A673 (cell line): ENCODE measurements at regions of chr6 and their contacts with region 1.

Region 1: DNA sequence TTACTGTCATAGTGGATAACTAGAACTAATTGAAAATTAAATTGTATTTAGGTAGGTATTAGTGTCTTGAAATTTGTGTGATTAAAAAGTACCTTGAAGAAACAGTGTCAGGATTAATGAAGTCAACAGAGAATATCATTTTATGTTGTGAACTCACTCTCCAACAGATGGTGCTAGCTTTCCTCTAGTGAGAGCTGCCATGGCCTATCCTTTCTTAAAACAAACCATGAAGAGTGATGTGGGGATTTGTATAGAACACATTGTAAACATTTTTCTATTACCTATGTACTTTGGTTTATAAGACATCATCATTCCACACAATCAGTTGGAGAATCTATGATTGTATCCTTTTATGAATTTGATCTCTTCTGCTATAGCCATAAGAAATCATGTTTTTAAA is 4.8 kb upstream of the SRSF12 start:
- DNase-seq: peak; percentile 74
- H3K4me3 ChIP-seq: no peak overlapping the region
- H3K27ac ChIP-seq: no peak overlapping the region
- H3K4me1 ChIP-seq: peaks cover 5% of the 10 kb centered on the region
- H3K27me3 ChIP-seq: no peaks in the 10 kb centered on the region
- CTCF ChIP-seq: peak; percentile 72

Region 2: DNA sequence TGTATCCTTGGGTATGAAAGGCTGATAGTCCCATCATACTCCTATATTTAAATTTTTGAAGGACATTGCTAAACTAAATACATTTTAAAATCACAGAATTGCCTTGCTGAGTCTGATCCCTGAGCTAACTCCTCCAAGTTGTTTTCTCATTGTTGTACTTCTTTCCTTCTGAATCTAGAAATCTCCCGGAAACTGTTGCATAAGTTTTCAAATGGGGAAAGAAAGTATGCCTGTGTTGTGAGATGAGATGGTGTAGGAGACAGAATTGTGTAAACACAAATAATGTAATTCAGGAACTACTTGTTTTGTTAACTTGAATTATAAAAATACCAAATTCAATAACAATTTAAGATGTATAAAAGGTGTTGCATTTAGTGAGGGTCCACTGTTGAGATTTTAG is 34.7 kb before region 1 on chr6:
- CTCF ChIA-PET with region 1: no interaction called
- POLR2A ChIA-PET with region 1: no interaction called
- intact Hi-C with region 1: no loop called
- DNase-seq: no peak
- H3K4me3 ChIP-seq: no peak overlapping the region
- H3K27ac ChIP-seq: no peak overlapping the region
- H3K4me1 ChIP-seq: peaks cover 3% of the 10 kb centered on the region
- H3K27me3 ChIP-seq: no peaks in the 10 kb centered on the region
- CTCF ChIP-seq: no peak

Region 3: DNA sequence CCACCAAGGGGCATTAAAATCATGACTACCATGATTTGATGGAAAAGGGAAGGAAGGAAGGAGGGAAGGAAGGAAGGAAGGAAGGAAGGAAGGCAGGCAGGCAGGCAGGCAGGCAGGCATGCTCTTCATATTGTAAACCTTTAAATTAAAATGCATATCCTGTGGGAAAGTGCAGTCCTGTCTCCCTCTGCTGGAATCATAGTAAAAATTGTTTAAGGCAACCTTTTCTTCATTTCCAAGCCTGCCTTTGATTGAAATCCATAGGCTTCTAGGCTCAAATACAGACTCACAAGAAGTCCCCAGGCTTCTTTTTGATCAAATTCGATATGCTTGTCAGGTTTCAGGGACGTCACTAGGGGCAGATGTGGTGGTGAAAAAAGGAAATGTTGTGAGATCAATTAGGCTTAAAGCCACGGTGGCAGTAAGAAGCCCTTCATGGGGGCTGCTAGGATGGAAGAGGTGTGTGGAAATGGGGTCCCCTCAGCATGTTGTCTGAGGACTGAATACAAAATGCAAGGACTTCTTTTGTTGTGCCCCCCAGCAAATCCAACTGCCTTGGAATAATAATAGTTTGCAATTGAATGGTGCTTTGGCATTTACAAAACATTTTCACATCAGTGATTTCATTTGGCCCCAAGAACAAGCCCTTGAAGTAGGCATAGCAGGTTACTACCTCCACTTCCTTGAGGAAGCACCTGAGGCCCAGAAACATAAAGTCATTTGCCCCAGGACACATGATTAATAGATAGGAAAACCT is 120.1 kb after region 1 on chr6:
- CTCF ChIA-PET with region 1: no interaction called
- POLR2A ChIA-PET with region 1: no interaction called
- intact Hi-C with region 1: loop called (anchors 1 kb)
- DNase-seq: peak; percentile 91
- H3K4me3 ChIP-seq: no peak overlapping the region
- H3K27ac ChIP-seq: peak overlapping the region; percentile 63
- H3K4me1 ChIP-seq: peaks cover 37% of the 10 kb centered on the region
- H3K27me3 ChIP-seq: no peaks in the 10 kb centered on the region
- CTCF ChIP-seq: peak; percentile 68

Region 4: GRCh38 chr6:89371849-89372505 is 249.4 kb after region 1 on chr6:
- CTCF ChIA-PET with region 1: no interaction called
- POLR2A ChIA-PET with region 1: no interaction called
- intact Hi-C with region 1: loop called (anchors 1 kb)
- DNase-seq: peak; percentile 75
- H3K4me3 ChIP-seq: no peak overlapping the region
- H3K27ac ChIP-seq: no peak overlapping the region
- H3K4me1 ChIP-seq: peaks cover 10% of the 10 kb centered on the region
- H3K27me3 ChIP-seq: no peaks in the 10 kb centered on the region
- CTCF ChIP-seq: peak; percentile 99